Colonic mucosa (tissue), 4 donors: ENCODE measurements at regions of chr6 and their contacts with region 1.

Region 1: GRCh38 chr6:83514866-83515466 is 2.6 kb downstream of the PRSS35 start:
- DNase-seq: peak; percentile 42
- H3K4me3 ChIP-seq: no peak overlapping the region
- H3K27ac ChIP-seq: no peak overlapping the region
- H3K4me1 ChIP-seq: no peaks in the 10 kb centered on the region
- H3K27me3 ChIP-seq: no peaks in the 10 kb centered on the region
- CTCF ChIP-seq: peak; percentile 74

Region 2: GRCh38 chr6:83417880-83418663 is 96.9 kb before region 1 on chr6:
- intact Hi-C with region 1: loop called (anchors 2 kb)
- DNase-seq: no peak
- H3K4me3 ChIP-seq: no peak overlapping the region
- H3K27ac ChIP-seq: no peak overlapping the region
- H3K4me1 ChIP-seq: no peaks in the 10 kb centered on the region
- H3K27me3 ChIP-seq: no peaks in the 10 kb centered on the region
- CTCF ChIP-seq: peak; percentile 69